ENCODE measurements at regions of chr11 and their contacts with region 1.

Region 1: GRCh38 chr11:123407130-123407995 is 22.7 kb upstream of the GRAMD1B start:
- H3K4me3 ChIP-seq: no peak overlapping the region
- H3K27ac ChIP-seq: no peak overlapping the region
- H3K4me1 ChIP-seq: 0 out of 2 replicates have a peak, but pooled peaks cover 5% of the 10 kb centered on the region
- CTCF ChIP-seq: peak; percentile 33; the same call in 1 of the 2 replicates

Region 2: GRCh38 chr11:123301696-123302400 is 105.5 kb before region 1 on chr11:
- CTCF ChIA-PET with region 1: interaction called, 16 read pairs
- POLR2A ChIA-PET with region 1: no interaction called
- H3K4me3 ChIP-seq: peak overlapping the region; percentile 10
- H3K27ac ChIP-seq: no peak overlapping the region
- H3K4me1 ChIP-seq: no peaks in the 10 kb centered on the region
- CTCF ChIP-seq: peak; percentile 21; the same call in 1 of the 2 replicates

Region 3: GRCh38 chr11:123316003-123316402 is 91.4 kb before region 1 on chr11:
- CTCF ChIA-PET with region 1: no interaction called
- POLR2A ChIA-PET with region 1: no interaction called
- H3K4me3 ChIP-seq: no peak overlapping the region
- H3K27ac ChIP-seq: no peak overlapping the region
- H3K4me1 ChIP-seq: no peaks in the 10 kb centered on the region
- CTCF ChIP-seq: no peak

Region 4: GRCh38 chr11:123391646-123392348 is 15.6 kb before region 1 on chr11:
- CTCF ChIA-PET with region 1: interaction called, 29 read pairs
- POLR2A ChIA-PET with region 1: no interaction called
- H3K4me3 ChIP-seq: no peak overlapping the region
- H3K27ac ChIP-seq: no peak overlapping the region
- H3K4me1 ChIP-seq: no peaks in the 10 kb centered on the region
- CTCF ChIP-seq: no peak

Region 5: GRCh38 chr11:123429913-123430720 is 22.8 kb after region 1 on chr11 and contains the start of gene GRAMD1B:
- CTCF ChIA-PET with region 1: interaction called, 26 read pairs
- POLR2A ChIA-PET with region 1: no interaction called
- H3K4me3 ChIP-seq: peak within 1 kb of the TSS; percentile 72
- H3K27ac ChIP-seq: peak within 1 kb of the TSS; percentile 81
- H3K4me1 ChIP-seq: no peaks in the 10 kb centered on the region
- CTCF ChIP-seq: peak; percentile 73

Region 6: DNA sequence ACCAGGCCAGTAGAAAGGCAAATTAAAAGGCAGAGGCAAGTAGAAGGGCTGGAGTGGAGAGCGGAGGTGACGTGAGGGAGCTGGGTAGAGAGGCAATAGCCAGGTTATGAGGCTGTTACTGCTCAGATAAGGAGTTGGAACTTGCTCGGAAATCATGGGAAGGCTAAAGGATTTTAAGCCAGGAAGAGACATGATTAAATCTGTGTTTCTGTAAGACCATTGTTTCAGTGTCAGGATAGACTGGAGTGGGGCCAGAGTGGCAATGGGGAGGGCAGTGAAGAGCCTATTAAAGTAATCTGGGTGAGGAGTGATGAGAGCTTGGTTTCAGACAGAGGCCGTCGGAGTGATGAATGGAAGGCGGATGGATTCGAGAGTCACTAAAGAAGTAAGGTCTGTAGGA is 61.7 kb after region 1 on chr11:
- CTCF ChIA-PET with region 1: interaction called, 209 read pairs
- POLR2A ChIA-PET with region 1: interaction called, 4 read pairs
- H3K4me3 ChIP-seq: no peak overlapping the region
- H3K27ac ChIP-seq: no peak overlapping the region
- H3K4me1 ChIP-seq: no peaks in the 10 kb centered on the region
- CTCF ChIP-seq: no peak

Region 7: GRCh38 chr11:123560006-123560405 is 152.6 kb after region 1 on chr11:
- CTCF ChIA-PET with region 1: interaction called, 10 read pairs
- POLR2A ChIA-PET with region 1: no interaction called
- H3K4me3 ChIP-seq: no peak overlapping the region
- H3K27ac ChIP-seq: no peak overlapping the region
- H3K4me1 ChIP-seq: peaks cover 2% of the 10 kb centered on the region; the same call in 1 of the 2 replicates
- CTCF ChIP-seq: no peak

Measured in HEK293 (cell line).